Activated T-helper 1 cell treated with anti-CD3 and anti-CD28 coated beads, Interleukin-12 subunit alpha, Interleukin-12 subunit beta, Interleukin-2, Interleukin-4 antibody, amounts not matched to agents 30 ng/mL and 10 ng/mL and 1 ng/mL, durations not matched to agents 14 hours and 24 hours and 36 hours (primary cell): ENCODE measurements at regions of chr2 and their contacts with region 1.

Region 1: DNA sequence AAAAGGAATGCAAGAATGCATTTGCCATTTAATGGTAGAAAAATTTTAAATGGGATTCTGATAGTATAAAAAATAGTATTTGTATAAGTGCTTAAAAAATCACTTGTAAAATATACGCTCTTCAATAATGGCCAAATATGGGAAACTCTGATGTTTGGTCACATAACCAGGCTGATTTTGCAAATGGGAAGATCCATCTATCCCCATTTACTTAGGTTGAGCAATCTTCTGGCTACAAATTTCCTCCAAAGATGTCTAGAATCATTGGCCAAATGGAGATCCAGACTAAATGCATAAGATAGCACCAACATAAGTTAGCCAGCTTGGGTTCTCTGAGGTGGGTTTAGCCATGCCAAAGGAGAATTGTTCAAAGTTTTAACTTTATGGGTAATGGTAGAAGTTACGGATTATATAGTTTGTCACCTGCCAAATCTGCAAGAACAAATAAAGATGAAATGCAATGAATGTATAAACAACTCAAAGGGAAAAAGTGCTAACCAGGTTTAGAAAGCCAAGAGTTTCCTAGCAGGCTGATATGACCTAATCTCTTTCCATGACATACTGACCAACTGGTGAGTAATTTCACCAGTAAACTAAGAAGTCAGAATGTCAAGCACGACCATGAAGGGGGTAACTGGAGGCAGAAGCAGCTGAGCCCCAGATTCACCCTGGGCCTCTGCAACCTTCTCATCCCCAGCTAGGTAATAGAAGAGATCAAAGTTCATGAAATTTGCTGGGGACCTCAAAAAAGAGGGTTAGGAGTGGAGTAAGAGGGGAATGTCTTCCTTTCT is 10.0 kb downstream of the RHOB start:
- DNase-seq: no peak
- H3K4me3 Mint-ChIP-seq: no peak overlapping the region
- H3K27ac Mint-ChIP-seq: peak overlapping the region; percentile 82
- H3K4me1 Mint-ChIP-seq: peaks cover 12% of the 10 kb centered on the region
- H3K27me3 Mint-ChIP-seq: peaks cover 24% of the 10 kb centered on the region

Region 2: GRCh38 chr2:20125616-20126015 is 331.2 kb before region 1 on chr2:
- intact Hi-C with region 1: no loop called
- DNase-seq: no peak
- H3K4me3 Mint-ChIP-seq: no peak overlapping the region
- H3K27ac Mint-ChIP-seq: no peak overlapping the region
- H3K4me1 Mint-ChIP-seq: no peaks in the 10 kb centered on the region
- H3K27me3 Mint-ChIP-seq: peaks cover 2% of the 10 kb centered on the region

Region 3: GRCh38 chr2:20430461-20431300 is 26.1 kb before region 1 on chr2:
- intact Hi-C with region 1: loop called (anchors 1 kb)
- DNase-seq: no peak
- H3K4me3 Mint-ChIP-seq: peak overlapping the region; percentile 1
- H3K27ac Mint-ChIP-seq: peak overlapping the region; percentile 45
- H3K4me1 Mint-ChIP-seq: peaks cover 38% of the 10 kb centered on the region
- H3K27me3 Mint-ChIP-seq: no peaks in the 10 kb centered on the region

Region 4: GRCh38 chr2:20507166-20507692 is 50.4 kb after region 1 on chr2:
- intact Hi-C with region 1: loop called (anchors 5 kb)
- DNase-seq: no peak
- H3K4me3 Mint-ChIP-seq: no peak overlapping the region
- H3K27ac Mint-ChIP-seq: peak overlapping the region; percentile 23
- H3K4me1 Mint-ChIP-seq: peaks cover 9% of the 10 kb centered on the region
- H3K27me3 Mint-ChIP-seq: peaks cover 3% of the 10 kb centered on the region